GM13976 (cell line): ENCODE measurements at regions of chr10 and their contacts with region 1.

Region 1: DNA sequence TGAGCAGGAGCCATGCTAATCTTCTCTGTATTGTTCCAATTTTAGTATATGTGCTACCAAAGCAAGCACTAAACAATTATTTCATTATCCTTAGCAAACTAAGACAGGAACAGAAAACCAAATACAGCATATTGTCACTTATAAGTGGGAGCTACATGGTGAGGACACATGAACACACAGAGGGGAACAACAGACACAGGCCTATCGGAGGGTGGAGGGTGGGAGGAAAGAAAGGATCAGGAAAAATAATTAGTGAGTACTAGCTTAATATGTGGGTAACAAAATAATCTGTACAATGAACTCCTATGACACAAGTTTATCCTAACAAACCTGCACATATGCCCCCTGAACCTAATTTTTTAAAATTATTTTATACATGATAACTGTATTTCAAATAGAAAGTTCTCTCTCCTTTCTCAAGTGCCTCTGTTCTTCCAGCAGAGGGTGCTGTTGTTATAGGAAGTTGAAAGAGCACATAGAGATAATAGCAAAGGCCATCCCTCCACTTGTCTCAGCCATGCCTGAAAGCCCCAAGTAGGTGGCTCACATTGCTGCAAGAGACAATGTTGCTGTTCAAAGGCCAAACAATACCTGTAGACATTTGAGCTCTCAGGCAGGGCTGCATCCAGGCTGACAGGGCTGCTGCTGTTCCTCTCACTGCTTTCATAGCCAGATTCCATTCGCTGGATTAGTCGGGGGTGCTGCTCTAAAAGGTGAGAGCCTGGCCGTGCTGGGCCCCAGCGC is 33.4 kb upstream of the PPP3CB start:
- DNase-seq: peak; percentile 82
- CTCF ChIP-seq: peak; percentile 42

Region 2: GRCh38 chr10:73644015-73644743 is 114.9 kb after region 1 on chr10:
- in situ Hi-C with region 1: loop called (anchors 5 kb)
- DNase-seq: peak; percentile 78
- CTCF ChIP-seq: peak; percentile 70